Upper lobe of right lung (tissue), 1 donor: ENCODE measurements at regions of chr6 and their contacts with region 1.

Region 1: GRCh38 chr6:1609648-1610496 is at the start of gene FOXC1:
- DNase-seq: peak; percentile 90
- ATAC-seq: peak; percentile 89
- H3K4me3 ChIP-seq: peak within 1 kb of the TSS; percentile 60
- H3K27ac ChIP-seq: peak within 1 kb of the TSS; percentile 74
- H3K4me1 ChIP-seq: peaks cover 11% of the 10 kb centered on the region
- H3K27me3 ChIP-seq: peaks cover 79% of the 10 kb centered on the region
- CTCF ChIP-seq: no peak
- total RNA-seq, gene FOXC1: 4.9 TPM

Region 2: DNA sequence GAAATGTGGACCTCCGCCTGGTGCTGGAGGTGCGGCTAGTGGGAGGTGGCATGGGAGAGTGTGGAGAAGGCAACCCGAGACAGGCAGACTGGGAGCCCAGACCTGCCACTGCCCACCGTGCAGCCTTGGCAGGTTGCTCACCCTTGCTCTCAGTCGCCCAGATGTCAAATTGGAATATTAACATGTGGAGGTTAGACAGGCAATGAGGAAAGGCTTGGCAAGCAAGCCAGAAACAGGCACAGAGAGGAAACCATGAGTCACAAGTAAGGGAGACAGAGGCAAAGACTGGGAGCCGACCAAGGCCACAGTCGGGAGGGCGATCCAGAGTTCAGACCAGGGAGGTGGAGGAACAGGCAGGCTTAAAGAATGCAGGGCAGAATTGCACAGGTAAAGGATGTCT is 178.0 kb after region 1 on chr6:
- intact Hi-C with region 1: no loop called
- DNase-seq: no peak
- ATAC-seq: peak; percentile 12
- H3K4me3 ChIP-seq: no peak overlapping the region
- H3K27ac ChIP-seq: no peak overlapping the region
- H3K4me1 ChIP-seq: no peaks in the 10 kb centered on the region
- H3K27me3 ChIP-seq: no peaks in the 10 kb centered on the region
- CTCF ChIP-seq: no peak

Region 3: GRCh38 chr6:2196079-2196679 is 586.3 kb after region 1 on chr6:
- intact Hi-C with region 1: loop called (anchors 10 kb)
- DNase-seq: no peak
- ATAC-seq: peak; percentile 93
- H3K4me3 ChIP-seq: no peak overlapping the region
- H3K27ac ChIP-seq: no peak overlapping the region
- H3K4me1 ChIP-seq: peaks cover 9% of the 10 kb centered on the region
- H3K27me3 ChIP-seq: no peaks in the 10 kb centered on the region
- CTCF ChIP-seq: peak; percentile 84

Region 4: DNA sequence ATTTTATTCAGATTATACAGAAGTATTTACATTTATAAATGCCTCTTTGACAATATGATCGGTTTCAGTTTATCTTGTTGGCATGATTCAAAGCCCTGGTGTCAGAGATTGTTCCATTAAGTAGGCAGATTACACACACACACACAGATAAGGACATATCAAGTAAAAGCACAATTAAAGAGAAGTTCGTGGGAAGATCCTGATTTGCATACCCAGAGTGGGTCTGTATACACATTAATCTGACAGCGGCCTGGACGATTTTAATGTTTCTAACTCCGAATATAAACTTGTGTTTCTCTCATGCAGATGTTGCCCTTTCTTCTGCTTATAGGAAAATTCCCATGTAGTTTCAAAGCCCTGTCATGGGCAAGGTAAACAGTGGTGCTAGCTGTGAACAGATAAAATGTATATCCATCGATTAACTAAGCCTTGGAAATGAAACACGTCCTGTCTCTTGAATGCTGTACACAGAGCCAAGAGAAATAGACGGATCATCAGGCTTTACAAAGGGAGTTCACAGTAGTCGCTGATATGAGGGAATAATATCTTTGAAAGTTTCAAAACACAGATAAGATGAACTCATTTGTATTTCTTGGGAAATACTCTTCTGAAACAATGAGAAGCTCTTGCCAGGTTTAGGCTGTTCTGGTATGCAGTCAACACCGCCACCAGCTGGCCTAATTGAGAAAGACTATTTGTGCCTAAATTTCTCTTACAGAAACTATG is 743.7 kb after region 1 on chr6:
- intact Hi-C with region 1: loop called (anchors 10 kb)
- DNase-seq: no peak
- ATAC-seq: peak; percentile 81
- H3K4me3 ChIP-seq: no peak overlapping the region
- H3K27ac ChIP-seq: no peak overlapping the region
- H3K4me1 ChIP-seq: no peaks in the 10 kb centered on the region
- H3K27me3 ChIP-seq: no peaks in the 10 kb centered on the region
- CTCF ChIP-seq: peak; percentile 77